ENCODE measurements at regions of chr17 and their contacts with region 1.

Region 1: DNA sequence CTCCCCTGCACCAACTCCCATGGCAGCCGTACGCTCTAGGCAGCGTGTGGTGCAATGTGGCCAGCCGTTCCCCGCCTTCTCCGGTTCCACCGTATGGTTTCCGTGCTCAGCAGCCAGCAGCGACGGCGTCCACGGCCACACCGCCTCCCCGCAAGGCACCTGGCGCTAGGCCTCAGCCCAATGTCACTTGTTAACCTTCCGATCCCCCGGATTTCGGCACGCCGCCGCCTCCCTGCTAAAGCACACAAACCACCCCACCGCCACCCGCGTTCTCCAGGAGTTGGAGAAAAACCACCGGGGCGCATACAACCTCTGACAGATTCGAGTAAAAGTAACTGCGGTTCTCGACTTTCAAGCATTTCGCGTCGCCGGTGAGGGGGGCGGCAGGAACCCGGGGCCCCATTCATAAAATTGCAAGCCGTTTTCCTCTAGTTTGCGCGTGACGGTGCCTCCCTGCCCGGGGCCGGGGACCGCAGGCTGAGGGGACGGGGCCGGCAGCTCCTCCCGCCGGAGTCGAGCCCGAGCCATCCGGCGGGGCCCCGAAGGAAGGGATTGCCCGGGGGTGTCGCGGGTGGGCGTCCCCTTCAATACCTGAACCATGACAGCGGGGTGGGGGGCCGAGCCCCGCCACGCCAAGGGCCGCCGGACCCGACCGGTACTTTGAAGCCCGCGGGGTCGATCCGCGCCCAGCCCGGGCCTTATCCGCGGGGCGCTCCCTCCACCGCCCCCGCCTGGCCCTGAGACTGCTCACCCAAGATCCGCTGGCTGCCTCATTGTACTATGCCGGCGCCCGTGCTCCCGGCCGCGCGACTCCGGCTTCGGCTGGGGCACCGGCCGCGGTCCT is at the start of gene TEX2:
- DNase-seq: peak; percentile 76
- H3K4me3 Mint-ChIP-seq: peak within 1 kb of the TSS; percentile 90
- H3K27ac Mint-ChIP-seq: peak within 1 kb of the TSS; percentile 88
- H3K4me1 Mint-ChIP-seq: peaks cover 39% of the 10 kb centered on the region
- H3K27me3 Mint-ChIP-seq: no peaks in the 10 kb centered on the region
- total RNA-seq, gene TEX2: 9.2 to 10.6 TPM

Region 2: DNA sequence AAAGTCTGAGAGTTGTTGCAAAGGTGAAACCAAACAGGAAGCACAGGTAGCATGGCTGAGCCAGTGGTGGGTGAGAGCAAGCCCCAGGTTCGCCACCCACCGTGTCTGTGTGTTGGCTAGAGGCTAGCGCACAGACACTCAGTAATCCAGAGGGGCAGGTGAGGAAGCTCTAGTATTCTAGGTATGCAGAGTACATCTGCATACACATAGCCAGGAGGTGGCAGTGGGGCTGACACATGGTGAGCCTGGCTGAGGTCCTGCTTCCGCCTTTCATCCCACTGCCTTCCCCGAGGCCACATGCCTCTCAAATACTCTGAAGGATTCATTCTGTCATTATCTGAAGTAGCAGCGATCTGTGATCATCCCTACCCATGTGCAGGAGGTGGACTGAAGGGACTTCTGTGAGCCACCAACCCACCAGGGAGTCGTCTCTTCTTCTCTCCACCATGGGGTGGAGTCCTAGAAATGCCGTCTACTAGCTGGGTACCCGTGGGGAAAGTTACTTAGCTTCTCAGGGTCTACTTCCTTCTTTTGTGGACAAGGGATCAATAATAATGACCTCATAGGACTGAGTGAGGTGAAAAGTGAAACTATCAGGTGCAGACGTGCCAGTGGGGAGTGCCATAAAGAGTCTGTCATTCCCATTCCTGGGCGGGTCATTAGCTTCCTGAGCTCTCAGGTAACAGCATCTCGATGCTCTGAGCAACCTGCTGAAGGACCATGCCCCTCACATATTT is 206.2 kb before region 1 on chr17:
- CTCF ChIA-PET with region 1: no interaction called
- intact Hi-C with region 1: no loop called
- DNase-seq: no peak
- H3K4me3 Mint-ChIP-seq: no peak overlapping the region
- H3K27ac Mint-ChIP-seq: no peak overlapping the region
- H3K4me1 Mint-ChIP-seq: peaks cover 35% of the 10 kb centered on the region
- H3K27me3 Mint-ChIP-seq: no peaks in the 10 kb centered on the region

Region 3: GRCh38 chr17:64145757-64146417 is 116.8 kb before region 1 on chr17:
- CTCF ChIA-PET with region 1: no interaction called
- intact Hi-C with region 1: loop called (anchors 1 kb)
- DNase-seq: peak; percentile 97
- H3K4me3 Mint-ChIP-seq: no peak overlapping the region
- H3K27ac Mint-ChIP-seq: no peak overlapping the region
- H3K4me1 Mint-ChIP-seq: peaks cover 16% of the 10 kb centered on the region
- H3K27me3 Mint-ChIP-seq: no peaks in the 10 kb centered on the region

Region 4: DNA sequence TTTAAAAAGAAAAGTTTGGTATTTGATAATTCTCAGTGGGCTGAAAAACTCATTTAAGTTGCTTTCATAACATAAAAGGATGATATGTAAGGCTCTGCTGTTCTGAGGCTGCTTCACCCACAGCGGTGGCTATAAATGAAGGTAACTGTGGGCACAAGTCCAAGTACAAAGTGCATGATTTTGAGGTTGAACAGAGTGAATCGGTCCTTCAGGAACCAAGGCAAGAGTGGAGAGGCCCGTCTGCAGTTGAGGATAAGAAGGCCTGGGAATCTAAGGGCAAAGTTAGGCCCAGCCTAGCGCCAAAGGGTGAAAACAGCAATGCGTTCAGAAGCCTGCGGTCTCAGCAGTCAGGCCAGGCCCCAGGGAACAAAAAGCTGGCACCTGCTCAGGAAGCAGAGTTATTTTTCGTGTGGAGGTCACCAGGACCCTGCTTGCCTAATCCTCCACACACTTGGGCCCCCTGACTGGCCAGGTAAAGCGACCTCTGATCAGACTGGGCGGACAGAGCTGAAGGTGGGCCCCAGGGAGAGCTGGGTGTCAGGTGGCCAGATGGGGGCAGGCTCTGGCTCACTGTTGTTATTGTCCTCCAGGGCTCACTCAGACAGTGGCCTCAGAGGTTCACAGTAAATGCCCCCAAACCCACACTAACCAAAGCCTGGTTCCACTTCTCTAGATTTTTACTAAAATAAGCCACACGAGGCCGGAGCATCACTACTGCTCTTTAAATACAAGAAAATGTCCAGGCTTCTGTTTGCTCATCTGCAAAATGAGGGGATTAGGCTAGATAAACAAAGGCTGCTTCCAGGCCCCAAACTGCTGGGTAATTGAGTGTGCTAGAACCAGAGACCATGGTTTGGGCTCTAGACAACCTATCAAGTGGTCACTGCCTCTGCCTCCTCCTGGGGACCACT is 46.0 kb before region 1 on chr17:
- CTCF ChIA-PET with region 1: no interaction called
- intact Hi-C with region 1: loop called (anchors 2 kb)
- DNase-seq: no peak
- H3K4me3 Mint-ChIP-seq: no peak overlapping the region
- H3K27ac Mint-ChIP-seq: no peak overlapping the region
- H3K4me1 Mint-ChIP-seq: peaks cover 33% of the 10 kb centered on the region
- H3K27me3 Mint-ChIP-seq: no peaks in the 10 kb centered on the region

Region 5: GRCh38 chr17:64281962-64282727 is 19.5 kb after region 1 on chr17:
- CTCF ChIA-PET with region 1: interaction called, 4 read pairs
- intact Hi-C with region 1: loop called (anchors 1 kb)
- DNase-seq: peak; percentile 67
- H3K4me3 Mint-ChIP-seq: no peak overlapping the region
- H3K27ac Mint-ChIP-seq: no peak overlapping the region
- H3K4me1 Mint-ChIP-seq: peaks cover 4% of the 10 kb centered on the region
- H3K27me3 Mint-ChIP-seq: no peaks in the 10 kb centered on the region

Region 6: DNA sequence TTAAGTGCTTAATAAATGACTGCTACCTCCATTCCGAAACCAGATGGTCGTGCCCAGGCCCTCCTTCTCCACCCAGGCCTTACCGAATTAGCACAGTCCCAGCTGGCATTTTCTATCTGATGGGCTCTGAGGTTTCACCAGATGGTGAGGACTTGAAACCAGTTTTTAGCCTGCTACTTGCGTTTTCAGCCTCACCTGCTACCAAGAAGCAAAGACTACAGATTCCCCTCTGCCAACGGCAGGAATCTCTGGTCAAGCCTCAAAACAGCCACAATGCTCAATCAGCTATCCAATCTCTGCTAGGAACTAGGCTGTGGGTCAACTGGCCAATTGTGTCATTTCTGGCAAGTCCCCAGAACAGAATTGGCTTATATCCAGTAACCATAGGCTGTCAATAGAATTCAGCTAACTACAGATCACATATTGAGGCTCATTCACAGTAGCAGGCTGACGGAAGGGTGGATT is 116.3 kb after region 1 on chr17:
- CTCF ChIA-PET with region 1: no interaction called
- intact Hi-C with region 1: no loop called
- DNase-seq: no peak
- H3K4me3 Mint-ChIP-seq: no peak overlapping the region
- H3K27ac Mint-ChIP-seq: no peak overlapping the region
- H3K4me1 Mint-ChIP-seq: no peaks in the 10 kb centered on the region
- H3K27me3 Mint-ChIP-seq: no peaks in the 10 kb centered on the region

Measured in activated naive CD4-positive, alpha-beta T cell treated with anti-CD3 and anti-CD28 coated beads for 36 hours (primary cell).